ENCODE measurements at regions of chr5 and their contacts with region 1.

Region 1: GRCh38 chr5:160119142-160119904 is at the start of gene PWWP2A:
- DNase-seq: peak; percentile 86 to 100 (median 99)
- ATAC-seq: peak; percentile 96
- H3K4me3 ChIP-seq: peak within 1 kb of the TSS; percentile 79
- H3K4me3 Mint-ChIP-seq: peak within 1 kb of the TSS; percentile 83 to 99 (median 94)
- H3K27ac ChIP-seq: peak within 1 kb of the TSS; percentile 83
- H3K27ac Mint-ChIP-seq: peak within 1 kb of the TSS; percentile 83 to 98 (median 94)
- H3K4me1 ChIP-seq: peaks cover 0 to 5% of the 10 kb centered on the region in 2 donors
- H3K4me1 Mint-ChIP-seq: peaks cover 0 to 25% (median 20%) of the 10 kb centered on the region in 7 donors
- H3K27me3 ChIP-seq: no peaks in the 10 kb centered on the region
- H3K27me3 Mint-ChIP-seq: peaks cover 0 to 8% (median 0%) of the 10 kb centered on the region in 5 donors
- total RNA-seq, gene PWWP2A: 21.2 to 43.6 (median 29.5) TPM

Region 2: DNA sequence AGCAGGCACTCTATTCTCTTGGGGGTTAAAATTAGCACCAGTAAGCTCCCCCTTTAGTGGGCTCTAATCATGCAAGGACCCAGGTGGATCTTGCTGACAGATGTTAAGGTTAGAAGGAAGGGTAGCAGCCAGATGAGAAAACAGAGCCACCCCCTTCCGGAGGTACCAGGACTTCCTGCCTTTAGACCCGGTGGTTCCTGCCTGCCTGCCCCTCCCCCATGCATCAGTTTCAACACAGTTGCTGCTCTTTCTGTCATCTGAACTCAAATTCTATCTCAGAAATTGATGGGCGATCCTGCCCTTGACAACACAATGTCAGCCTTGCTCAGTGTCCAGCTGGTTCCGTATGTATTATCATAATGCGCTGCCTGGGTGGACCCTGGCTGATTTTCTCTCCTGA is 1306.9 kb before region 1 on chr5:
- CTCF ChIA-PET with region 1: no interaction called
- POLR2A ChIA-PET with region 1: no interaction called
- intact Hi-C with region 1: loop called in 1 of 2 experiments (anchors 1 kb)
- DNase-seq: peak; percentile 13 to 83 (median 72)
- ATAC-seq: peak; percentile 75
- H3K4me3 ChIP-seq: peak overlapping the region; percentile 26
- H3K4me3 Mint-ChIP-seq: peak overlapping the region; percentile 39 to 81 (median 70)
- H3K27ac ChIP-seq: peak overlapping the region; percentile 42
- H3K27ac Mint-ChIP-seq: peak overlapping the region; percentile 60 to 88 (median 82)
- H3K4me1 ChIP-seq: peaks cover 11 to 25% of the 10 kb centered on the region in 2 donors
- H3K4me1 Mint-ChIP-seq: peaks cover 22 to 70% (median 52%) of the 10 kb centered on the region in 7 donors
- H3K27me3 ChIP-seq: no peaks in the 10 kb centered on the region
- H3K27me3 Mint-ChIP-seq: peaks cover 0 to 7% (median 0%) of the 10 kb centered on the region in 5 donors

Region 3: DNA sequence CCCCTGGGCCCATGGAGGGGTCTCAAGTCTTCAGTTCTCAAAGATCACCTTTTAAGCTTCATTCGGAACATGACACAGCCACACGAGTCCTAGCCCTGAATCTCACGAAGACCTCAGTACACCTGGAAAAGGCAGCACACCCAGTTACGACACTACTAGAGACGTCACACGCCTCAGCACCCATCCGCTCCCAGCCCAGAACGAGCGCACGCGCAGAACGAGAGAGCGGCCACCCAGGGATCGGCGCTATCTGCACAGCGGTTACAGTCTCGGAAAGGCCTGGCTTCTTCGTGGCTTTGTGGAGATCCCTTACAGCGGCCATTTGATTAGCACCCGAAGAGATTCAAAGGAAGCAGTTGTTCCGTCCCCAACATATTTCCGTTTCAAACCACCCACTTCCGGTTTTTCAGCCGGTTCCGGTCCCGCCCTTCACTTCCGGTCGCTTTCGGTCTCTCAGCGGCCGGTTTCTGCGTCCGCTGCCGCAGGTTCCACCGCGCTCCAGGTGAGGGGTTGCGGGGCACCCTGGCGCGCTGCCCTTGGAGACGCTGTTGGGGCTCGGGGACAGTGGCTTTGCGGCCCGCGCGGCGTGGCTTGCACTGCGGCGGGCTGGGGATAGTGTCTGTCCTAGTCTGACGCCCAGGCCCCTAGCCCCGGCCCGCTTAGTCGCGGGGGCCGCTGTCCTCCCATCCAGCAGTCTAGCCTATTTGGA is 856.3 kb before region 1 on chr5 and contains the start of gene UBLCP1:
- CTCF ChIA-PET with region 1: no interaction called
- POLR2A ChIA-PET with region 1: interaction called, 4 read pairs
- intact Hi-C with region 1: loop called (anchors 1 kb)
- DNase-seq: peak; percentile 65 to 88 (median 83)
- ATAC-seq: peak; percentile 91
- H3K4me3 ChIP-seq: peak within 1 kb of the TSS; percentile 76
- H3K4me3 Mint-ChIP-seq: peak within 1 kb of the TSS; percentile 89 to 99 (median 96)
- H3K27ac ChIP-seq: peak within 1 kb of the TSS; percentile 90
- H3K27ac Mint-ChIP-seq: peak within 1 kb of the TSS; percentile 97 to 100 (median 99)
- H3K4me1 ChIP-seq: peaks cover 8 to 17% of the 10 kb centered on the region in 2 donors
- H3K4me1 Mint-ChIP-seq: peaks cover 28 to 65% (median 52%) of the 10 kb centered on the region in 7 donors
- H3K27me3 ChIP-seq: no peaks in the 10 kb centered on the region
- H3K27me3 Mint-ChIP-seq: peaks cover 0 to 4% (median 0%) of the 10 kb centered on the region in 5 donors
- total RNA-seq, gene UBLCP1: 18.2 to 30.9 (median 30.2) TPM

Region 4: DNA sequence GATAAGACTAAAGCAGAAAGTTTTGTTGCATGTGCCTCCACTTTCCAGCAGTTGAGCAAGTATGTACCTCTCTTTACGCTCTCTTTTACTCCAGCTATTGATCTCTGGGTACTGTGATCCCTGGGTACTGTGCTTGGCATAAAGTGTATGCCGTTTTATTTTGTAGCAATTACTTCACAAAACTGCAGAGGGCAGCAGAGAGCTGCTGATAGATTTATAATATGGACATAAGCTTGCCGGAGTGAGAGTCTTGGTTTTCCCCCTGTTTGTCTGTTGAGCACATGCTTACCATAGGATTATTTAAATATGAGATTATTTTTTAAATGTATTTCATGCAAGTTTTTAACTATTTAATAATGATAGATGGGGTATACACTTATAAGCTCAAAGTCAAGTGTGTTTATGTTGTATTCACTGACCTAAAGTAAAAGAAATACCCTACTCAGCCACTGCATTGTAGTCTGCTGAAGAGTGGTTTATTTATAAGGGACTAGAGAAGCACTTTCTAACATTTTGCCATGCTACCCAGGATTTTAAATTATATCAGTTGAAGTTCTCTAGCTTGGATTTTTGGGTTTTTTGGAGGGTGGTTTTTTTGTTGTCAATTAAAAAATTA is 97.4 kb before region 1 on chr5:
- CTCF ChIA-PET with region 1: no interaction called
- POLR2A ChIA-PET with region 1: no interaction called
- intact Hi-C with region 1: loop called (anchors 1 to 5 kb)
- DNase-seq: peak in 8 of 9 donors; percentile 12 to 76 (median 64)
- ATAC-seq: peak; percentile 97
- H3K4me3 ChIP-seq: no peak overlapping the region
- H3K4me3 Mint-ChIP-seq: peak overlapping the region in 1 of 10 donors; percentile 6
- H3K27ac ChIP-seq: no peak overlapping the region
- H3K27ac Mint-ChIP-seq: peak overlapping the region in 7 of 9 donors; percentile 15 to 93 (median 68)
- H3K4me1 ChIP-seq: peaks cover 3 to 15% of the 10 kb centered on the region in 2 donors
- H3K4me1 Mint-ChIP-seq: peaks cover 17 to 53% (median 37%) of the 10 kb centered on the region in 7 donors
- H3K27me3 ChIP-seq: no peaks in the 10 kb centered on the region
- H3K27me3 Mint-ChIP-seq: no peaks in the 10 kb centered on the region

Region 5: DNA sequence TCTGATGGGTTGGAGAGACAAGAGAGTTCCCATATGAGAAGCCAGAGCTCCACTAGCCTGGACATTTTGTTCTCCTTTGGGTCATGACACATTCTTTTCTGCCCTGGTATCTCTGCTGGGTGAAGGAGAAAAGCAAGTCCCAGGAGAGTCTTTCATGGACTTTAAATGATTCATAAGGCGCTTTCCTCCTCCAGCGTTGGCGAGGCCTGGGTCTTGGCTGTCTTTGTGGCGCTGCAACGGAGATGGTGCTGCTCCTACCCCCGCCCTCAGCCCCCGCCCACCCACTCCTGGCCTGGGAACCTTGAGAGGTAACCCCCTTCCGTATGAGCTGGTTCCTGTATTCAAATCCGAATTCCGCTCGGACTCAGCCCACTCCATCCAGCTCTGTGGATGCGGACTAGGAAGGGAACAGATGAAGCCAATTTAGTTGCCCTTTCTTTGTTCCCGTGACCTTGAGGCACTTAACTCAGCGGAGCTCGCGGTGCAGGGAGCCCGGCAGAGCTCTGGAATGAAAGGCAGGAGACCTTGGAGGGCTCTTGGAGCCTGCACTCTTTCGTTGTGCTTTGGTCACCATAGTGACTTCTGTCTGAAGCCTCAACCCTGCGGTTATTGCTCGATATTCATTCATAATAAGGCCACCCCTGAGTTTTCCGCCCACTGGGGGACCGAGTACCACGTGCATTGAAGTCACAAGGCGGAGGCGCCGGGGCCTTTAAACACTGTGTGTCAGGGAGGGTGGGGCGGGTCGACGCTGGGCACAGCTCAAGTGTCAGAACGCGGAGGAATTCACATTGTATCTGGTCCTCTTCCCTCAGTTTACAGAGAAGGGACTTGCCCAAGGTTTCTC is 14.0 kb after region 1 on chr5:
- CTCF ChIA-PET with region 1: no interaction called
- POLR2A ChIA-PET with region 1: no interaction called
- intact Hi-C with region 1: no loop called
- DNase-seq: no peak
- ATAC-seq: no peak
- H3K4me3 ChIP-seq: no peak overlapping the region
- H3K4me3 Mint-ChIP-seq: no peak overlapping the region
- H3K27ac ChIP-seq: no peak overlapping the region
- H3K27ac Mint-ChIP-seq: no peak overlapping the region
- H3K4me1 ChIP-seq: no peaks in the 10 kb centered on the region
- H3K4me1 Mint-ChIP-seq: no peaks in the 10 kb centered on the region
- H3K27me3 ChIP-seq: no peaks in the 10 kb centered on the region
- H3K27me3 Mint-ChIP-seq: peaks cover 0 to 4% (median 0%) of the 10 kb centered on the region in 5 donors

Region 6: GRCh38 chr5:160399402-160400353 is 280.4 kb after region 1 on chr5 and contains the start of gene FAM200C:
- CTCF ChIA-PET with region 1: no interaction called
- POLR2A ChIA-PET with region 1: no interaction called
- intact Hi-C with region 1: loop called in 1 of 2 experiments (anchors 5 kb)
- DNase-seq: peak; percentile 32 to 82 (median 40)
- ATAC-seq: peak; percentile 78
- H3K4me3 ChIP-seq: peak within 1 kb of the TSS; percentile 73
- H3K4me3 Mint-ChIP-seq: peak within 1 kb of the TSS; percentile 86 to 94 (median 92)
- H3K27ac ChIP-seq: peak within 1 kb of the TSS; percentile 67
- H3K27ac Mint-ChIP-seq: peak within 1 kb of the TSS; percentile 65 to 88 (median 82)
- H3K4me1 ChIP-seq: peaks cover 4 to 7% of the 10 kb centered on the region in 2 donors
- H3K4me1 Mint-ChIP-seq: peaks cover 8 to 23% (median 20%) of the 10 kb centered on the region in 7 donors
- H3K27me3 ChIP-seq: no peaks in the 10 kb centered on the region
- H3K27me3 Mint-ChIP-seq: no peaks in the 10 kb centered on the region
- total RNA-seq, gene FAM200C: 0.22 to 0.94 (median 0.78) TPM in 4 of 5 experiments, not detected in the other

Region 7: GRCh38 chr5:160508780-160509361 is 389.5 kb after region 1 on chr5:
- CTCF ChIA-PET with region 1: no interaction called
- POLR2A ChIA-PET with region 1: no interaction called
- intact Hi-C with region 1: loop called in 1 of 2 experiments (anchors 2 kb)
- DNase-seq: peak in 8 of 9 donors; percentile 51 to 81 (median 74)
- ATAC-seq: peak; percentile 83
- H3K4me3 ChIP-seq: no peak overlapping the region
- H3K4me3 Mint-ChIP-seq: peak overlapping the region in 2 of 10 donors; percentile 20 to 65
- H3K27ac ChIP-seq: no peak overlapping the region
- H3K27ac Mint-ChIP-seq: peak overlapping the region in 6 of 9 donors; percentile 19 to 84 (median 68)
- H3K4me1 ChIP-seq: peaks cover 9 to 32% of the 10 kb centered on the region in 2 donors
- H3K4me1 Mint-ChIP-seq: peaks cover 24 to 50% (median 29%) of the 10 kb centered on the region in 7 donors
- H3K27me3 ChIP-seq: no peaks in the 10 kb centered on the region
- H3K27me3 Mint-ChIP-seq: peaks cover 0 to 13% (median 6%) of the 10 kb centered on the region in 5 donors